H1 (cell line): ENCODE measurements at regions of chr4 and their contacts with region 1.

Region 1: DNA sequence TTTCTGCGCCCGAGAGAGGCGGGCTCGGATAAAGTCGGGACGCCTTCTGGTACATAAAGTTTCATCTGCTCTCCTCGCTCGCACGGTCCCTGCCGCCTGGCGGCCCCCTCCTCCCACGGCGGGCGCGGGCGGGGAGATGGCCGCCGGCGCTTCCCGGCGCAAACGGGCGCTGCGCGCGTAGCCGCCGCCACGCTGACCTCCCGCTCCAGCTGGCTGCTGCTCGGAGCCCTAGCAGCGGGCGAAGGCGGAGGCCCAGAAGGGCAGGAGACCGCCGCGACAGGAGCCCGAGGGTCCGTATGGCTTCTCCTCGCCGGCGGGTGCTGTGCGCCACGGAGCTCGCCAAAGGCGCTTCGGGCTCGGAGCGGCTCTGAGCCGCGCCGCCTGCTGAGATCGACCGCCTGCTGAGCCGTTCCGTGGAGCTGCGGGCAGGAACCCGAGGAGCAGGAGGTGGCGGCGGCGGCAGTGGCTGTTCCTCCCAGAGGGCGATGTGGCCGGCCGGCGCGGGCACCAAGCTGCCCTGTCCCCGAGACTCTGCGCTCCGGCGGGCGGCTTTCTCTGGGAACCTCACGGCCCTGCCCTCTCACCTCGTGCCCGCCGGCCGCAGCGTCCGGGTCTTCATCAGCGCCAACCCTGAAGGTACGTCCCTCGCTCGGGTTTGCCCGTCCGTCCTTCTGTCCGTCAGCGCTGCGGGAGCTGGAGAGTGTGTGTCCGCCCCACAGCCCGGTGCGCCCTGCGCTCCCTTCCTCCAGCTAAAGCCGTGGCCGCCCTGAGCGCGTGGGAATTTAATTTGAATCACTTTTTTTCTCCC is at the start of gene NWD2:
- DNase-seq: peak in 1 of 2 experiments; percentile 78
- H3K4me3 ChIP-seq: peak within 1 kb of the TSS; percentile 41 to 70 (median 52)
- H3K27ac ChIP-seq: no peak within 1 kb of the TSS
- H3K4me1 ChIP-seq: peaks cover 0 to 6% (median 1%) of the 10 kb centered on the region in 4 experiments; a peak in 5 of 7 replicates
- H3K27me3 ChIP-seq: peaks cover 15 to 65% (median 57%) of the 10 kb centered on the region in 4 experiments
- CTCF ChIP-seq: no peak
- EP300 ChIP-seq: no peak
- POLR2A ChIP-seq: no peak
- RAD21 ChIP-seq: 0 out of 4 replicates have a peak, but pooled peaks of 1 of the 2 experiments have one; percentile 8
- total RNA-seq, gene NWD2: not detected in 2 replicates

Region 2: DNA sequence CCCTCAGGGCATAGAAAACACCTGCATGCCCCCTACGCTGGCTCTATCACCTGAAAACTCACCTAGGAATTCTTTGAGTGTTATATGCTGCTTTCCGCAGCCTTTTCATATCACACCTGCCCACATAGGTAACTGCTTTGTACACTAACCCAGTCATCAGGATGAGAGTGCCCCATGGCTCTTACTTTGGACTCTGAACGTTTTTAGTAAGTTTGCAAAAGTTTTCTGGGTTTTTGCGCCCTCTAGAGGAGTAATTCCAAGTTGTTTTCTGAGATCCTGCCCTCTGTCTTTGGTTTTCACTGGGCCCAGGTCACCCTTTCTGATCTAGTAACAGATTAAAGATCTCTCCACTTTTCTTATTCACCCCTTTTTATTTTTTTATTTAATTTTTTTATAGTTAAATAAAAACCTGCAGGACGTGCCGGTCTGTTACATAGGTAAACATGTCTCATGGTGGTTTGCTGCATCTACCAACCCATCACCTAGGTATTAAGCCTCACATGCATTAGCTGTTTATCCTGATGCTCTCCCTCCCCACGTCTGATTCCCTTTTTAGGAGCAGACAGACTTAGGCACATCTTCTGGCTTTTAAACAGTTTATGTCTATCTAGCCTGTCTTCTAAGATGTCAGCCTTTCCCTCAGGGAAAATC is 138.9 kb after region 1 on chr4:
- CTCF ChIA-PET with region 1: interaction called, 14 read pairs
- POLR2A ChIA-PET with region 1: no interaction called
- DNase-seq: peak in 1 of 2 experiments; percentile 52
- H3K4me3 ChIP-seq: no peak overlapping the region
- H3K27ac ChIP-seq: no peak overlapping the region
- H3K4me1 ChIP-seq: peaks cover 0 to 3% (median under 1%) of the 10 kb centered on the region in 4 experiments; a peak in 2 of 7 replicates
- H3K27me3 ChIP-seq: no peaks in the 10 kb centered on the region
- CTCF ChIP-seq: peak in 2 of 3 experiments; percentile 65 to 95; a peak in 3 of 4 replicates
- EP300 ChIP-seq: no peak
- POLR2A ChIP-seq: no peak
- RAD21 ChIP-seq: peak; percentile 71 to 80

Region 3: GRCh38 chr4:37389967-37390580 is 145.3 kb after region 1 on chr4:
- CTCF ChIA-PET with region 1: interaction called, 14 read pairs
- POLR2A ChIA-PET with region 1: interaction called, 3 read pairs
- DNase-seq: no peak
- H3K4me3 ChIP-seq: no peak overlapping the region
- H3K27ac ChIP-seq: no peak overlapping the region
- H3K4me1 ChIP-seq: peaks cover 0 to 5% (median 3%) of the 10 kb centered on the region in 4 experiments; a peak in 3 of 7 replicates
- H3K27me3 ChIP-seq: no peaks in the 10 kb centered on the region
- CTCF ChIP-seq: peak in 2 of 3 experiments; percentile 47 to 62; a peak in 2 of 4 replicates
- EP300 ChIP-seq: no peak
- POLR2A ChIP-seq: no peak
- RAD21 ChIP-seq: peak; percentile 72 to 76